ENCODE measurements at regions of chr3 and their contacts with region 1.

Region 1: DNA sequence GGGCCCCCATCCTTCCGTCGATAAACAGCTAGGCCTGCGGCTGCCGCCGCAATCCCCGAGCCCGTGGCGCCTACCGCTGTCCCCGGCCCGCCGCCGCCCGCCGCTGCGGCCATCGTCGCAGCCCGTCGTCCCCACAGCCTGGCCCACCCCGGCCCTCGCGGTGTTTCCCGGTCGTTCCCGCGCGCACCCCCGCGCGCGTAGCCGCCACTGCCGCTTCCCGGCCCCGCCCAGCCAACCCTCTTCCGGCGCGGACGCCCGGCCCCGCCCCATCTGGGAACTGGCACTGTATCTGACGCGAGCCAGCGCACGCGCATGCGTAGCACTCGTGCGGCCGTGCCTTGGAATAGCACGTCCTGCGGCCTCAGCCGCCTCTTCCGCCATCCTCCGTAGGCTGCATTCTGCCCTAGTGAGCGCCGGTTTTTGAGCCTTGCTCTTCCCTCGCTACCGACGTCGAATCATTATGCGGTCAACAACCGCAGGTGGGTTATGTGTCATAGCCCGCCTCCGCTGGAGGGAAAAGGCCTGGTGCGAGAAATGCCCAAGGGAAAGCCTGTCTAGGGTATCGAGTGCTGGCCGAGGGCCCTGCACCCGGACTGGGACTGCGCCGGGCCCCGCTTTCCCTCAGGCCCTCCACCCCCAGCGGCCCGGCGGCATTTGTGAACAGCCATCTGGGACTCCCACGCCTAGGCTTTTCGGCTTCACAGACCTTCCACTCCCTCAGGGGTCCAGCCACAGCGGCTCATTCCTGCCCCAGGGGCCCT is at the start of gene SMARCC1:
- DNase-seq: peak; percentile 98 to 100 (median 99)
- ATAC-seq: peak; percentile 98 to 100 (median 99)
- H3K4me3 ChIP-seq: peak within 1 kb of the TSS; percentile 60 to 98 (median 86)
- H3K27ac ChIP-seq: peak within 1 kb of the TSS; percentile 89 to 99 (median 96)
- H3K4me1 ChIP-seq: peaks cover 0 to 43% (median 26%) of the 10 kb centered on the region in 12 donors
- H3K27me3 ChIP-seq: no peaks in the 10 kb centered on the region
- CTCF ChIP-seq: peak in 1 of 12 donors; percentile 21
- POLR2A ChIP-seq: peak; percentile 7 to 82
- total RNA-seq, gene SMARCC1: 17.6 to 31.4 (median 25.5) TPM

Region 2: GRCh38 chr3:47503033-47503432 is 278.8 kb before region 1 on chr3:
- intact Hi-C with region 1: no loop called
- DNase-seq: no peak
- ATAC-seq: no peak
- H3K4me3 ChIP-seq: no peak overlapping the region
- H3K27ac ChIP-seq: no peak overlapping the region
- H3K4me1 ChIP-seq: no peaks in the 10 kb centered on the region
- H3K27me3 ChIP-seq: no peaks in the 10 kb centered on the region
- CTCF ChIP-seq: no peak
- POLR2A ChIP-seq: no peak

Region 3: DNA sequence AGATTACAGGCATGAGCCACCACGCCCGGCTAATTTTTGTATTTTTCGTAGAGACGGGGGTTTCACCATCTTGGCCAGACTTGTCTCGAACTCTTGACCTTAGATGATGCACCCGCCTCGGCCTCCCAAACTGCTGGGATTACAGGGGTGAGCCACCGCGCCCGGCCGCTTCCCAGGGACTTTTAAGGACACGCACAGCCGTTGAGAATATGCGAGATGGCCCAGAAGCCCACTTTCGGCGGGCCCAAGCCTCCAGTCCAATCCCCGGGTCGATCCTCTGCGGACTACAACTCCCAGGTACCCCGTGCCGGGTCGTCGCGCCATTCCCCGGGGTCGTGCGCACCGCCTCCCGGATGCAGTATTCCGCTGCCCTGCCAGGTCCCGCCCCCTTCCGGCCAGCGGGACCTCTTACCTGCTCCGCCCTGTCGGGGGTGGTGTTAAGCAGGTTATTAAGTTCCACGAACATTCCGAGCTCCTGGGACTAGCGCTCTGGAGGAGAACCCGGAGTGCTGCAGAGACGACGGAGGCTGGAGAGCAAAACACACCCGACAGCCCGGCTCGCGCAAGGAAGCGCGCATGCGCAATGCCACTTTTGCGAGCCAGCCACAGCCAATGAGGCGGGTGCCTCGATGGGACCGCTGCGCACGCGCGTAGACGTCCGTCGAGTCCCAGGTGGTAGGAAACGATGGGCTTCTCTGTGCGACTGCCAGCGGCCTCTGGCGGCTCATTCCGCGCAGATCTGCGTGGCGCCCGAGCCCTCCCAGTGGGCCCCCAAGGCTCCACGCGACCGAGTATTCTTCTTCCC is 268.5 kb before region 1 on chr3 and contains the start of gene ELP6:
- intact Hi-C with region 1: loop called in 1 of 10 experiments (anchors 5 kb)
- DNase-seq: peak; percentile 98
- ATAC-seq: peak; percentile 99
- H3K4me3 ChIP-seq: peak within 1 kb of the TSS; percentile 37 to 99 (median 71)
- H3K27ac ChIP-seq: peak within 1 kb of the TSS; percentile 86 to 100 (median 96)
- H3K4me1 ChIP-seq: peaks cover 0 to 16% (median 8%) of the 10 kb centered on the region in 12 donors
- H3K27me3 ChIP-seq: no peaks in the 10 kb centered on the region
- CTCF ChIP-seq: peak in 10 of 12 donors; percentile 32 to 66 (median 46)
- POLR2A ChIP-seq: peak in 1 of 2 donors; percentile 77
- total RNA-seq, gene ELP6: 14.9 to 22.1 (median 19.7) TPM

Region 4: GRCh38 chr3:47705391-47705790 is 76.5 kb before region 1 on chr3:
- intact Hi-C with region 1: loop called in 3 of 10 experiments (anchors 10 kb)
- DNase-seq: no peak
- ATAC-seq: no peak
- H3K4me3 ChIP-seq: no peak overlapping the region
- H3K27ac ChIP-seq: no peak overlapping the region
- H3K4me1 ChIP-seq: no peaks in the 10 kb centered on the region
- H3K27me3 ChIP-seq: no peaks in the 10 kb centered on the region
- CTCF ChIP-seq: no peak
- POLR2A ChIP-seq: no peak

Region 5: GRCh38 chr3:47715928-47716327 is 65.9 kb before region 1 on chr3:
- intact Hi-C with region 1: loop called in 2 of 10 experiments (anchors 10 kb)
- DNase-seq: peak in 1 of 5 donors; percentile 51
- ATAC-seq: peak in 3 of 4 donors; percentile 34 to 70 (median 53)
- H3K4me3 ChIP-seq: no peak overlapping the region
- H3K27ac ChIP-seq: peak overlapping the region in 6 of 12 donors; percentile 5 to 43 (median 29)
- H3K4me1 ChIP-seq: peaks cover 0 to 28% (median 9%) of the 10 kb centered on the region in 12 donors
- H3K27me3 ChIP-seq: no peaks in the 10 kb centered on the region
- CTCF ChIP-seq: no peak
- POLR2A ChIP-seq: no peak

Region 6: GRCh38 chr3:47741925-47742324 is 39.9 kb before region 1 on chr3:
- intact Hi-C with region 1: loop called in 1 of 10 experiments (anchors 5 kb)
- DNase-seq: no peak
- ATAC-seq: no peak
- H3K4me3 ChIP-seq: no peak overlapping the region
- H3K27ac ChIP-seq: peak overlapping the region in 4 of 12 donors; percentile 5 to 21 (median 12)
- H3K4me1 ChIP-seq: peaks cover 0 to 26% (median 14%) of the 10 kb centered on the region in 12 donors
- H3K27me3 ChIP-seq: no peaks in the 10 kb centered on the region
- CTCF ChIP-seq: no peak
- POLR2A ChIP-seq: no peak

Measured in heart left ventricle (tissue), 16 donors.